ENCODE measurements at regions of chr1 and their contacts with region 1.

Region 1: GRCh38 chr1:202615501-202616354 is 94.5 kb downstream of the SYT2 start:
- DNase-seq: peak; percentile 79
- ATAC-seq: peak; percentile 80
- H3K4me3 ChIP-seq: peak overlapping the region in 2 of 5 experiments; percentile 17 to 39
- H3K4me3 Mint-ChIP-seq: peak overlapping the region; percentile 72
- H3K27ac ChIP-seq: no peak overlapping the region
- H3K27ac Mint-ChIP-seq: peak overlapping the region; percentile 74
- H3K4me1 ChIP-seq: peaks cover 27 to 42% of the 10 kb centered on the region in 2 donors
- H3K4me1 Mint-ChIP-seq: peaks cover 44% of the 10 kb centered on the region
- H3K27me3 ChIP-seq: peaks cover 0 to 10% (median 2%) of the 10 kb centered on the region in 4 experiments
- H3K27me3 Mint-ChIP-seq: peaks cover 12% of the 10 kb centered on the region
- CTCF ChIP-seq: no peak

Region 2: GRCh38 chr1:202880961-202881460 is 265.3 kb after region 1 on chr1:
- CTCF ChIA-PET with region 1: no interaction called
- POLR2A ChIA-PET with region 1: no interaction called
- intact Hi-C with region 1: no loop called
- DNase-seq: no peak
- ATAC-seq: no peak
- H3K4me3 ChIP-seq: no peak overlapping the region
- H3K4me3 Mint-ChIP-seq: no peak overlapping the region
- H3K27ac ChIP-seq: no peak overlapping the region
- H3K27ac Mint-ChIP-seq: no peak overlapping the region
- H3K4me1 ChIP-seq: no peaks in the 10 kb centered on the region
- H3K4me1 Mint-ChIP-seq: peaks cover 5% of the 10 kb centered on the region
- H3K27me3 ChIP-seq: no peaks in the 10 kb centered on the region
- H3K27me3 Mint-ChIP-seq: no peaks in the 10 kb centered on the region
- CTCF ChIP-seq: no peak

Region 3: DNA sequence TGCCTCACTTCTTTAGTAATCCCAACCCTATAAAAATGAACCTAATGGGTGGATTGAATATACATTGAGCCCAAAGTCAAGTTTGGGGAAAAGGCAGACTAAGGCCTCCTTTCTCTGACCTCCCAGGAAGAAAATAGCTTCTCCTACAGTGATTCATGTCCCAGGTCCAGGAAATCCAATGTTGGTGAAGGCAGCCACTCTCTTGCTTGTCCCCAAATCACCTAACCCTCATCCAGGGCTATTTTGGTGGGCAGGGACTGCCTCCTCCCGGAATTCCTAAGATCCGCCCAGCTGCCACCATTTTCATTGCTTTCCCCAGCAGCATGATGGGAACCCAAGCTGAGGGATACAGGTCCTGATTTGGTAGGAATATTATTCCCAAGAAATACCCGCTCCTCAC is 461.6 kb after region 1 on chr1:
- CTCF ChIA-PET with region 1: no interaction called
- POLR2A ChIA-PET with region 1: interaction called, 14 read pairs
- intact Hi-C with region 1: no loop called
- DNase-seq: no peak
- ATAC-seq: no peak
- H3K4me3 ChIP-seq: no peak overlapping the region
- H3K4me3 Mint-ChIP-seq: no peak overlapping the region
- H3K27ac ChIP-seq: no peak overlapping the region
- H3K27ac Mint-ChIP-seq: no peak overlapping the region
- H3K4me1 ChIP-seq: peaks cover 12% of the 10 kb centered on the region in 2 donors
- H3K4me1 Mint-ChIP-seq: peaks cover 8% of the 10 kb centered on the region
- H3K27me3 ChIP-seq: peaks cover 0 to 41% (median 10%) of the 10 kb centered on the region in 4 experiments
- H3K27me3 Mint-ChIP-seq: peaks cover 65% of the 10 kb centered on the region
- CTCF ChIP-seq: no peak

Measured in B cell (primary cell).